ENCODE measurements at regions of chr15 and their contacts with region 1.

Region 1: GRCh38 chr15:68875377-68876116 is 54.8 kb upstream of the SPESP1 start:
- DNase-seq: peak; percentile 92
- ATAC-seq: peak; percentile 90 to 98 (median 96)
- H3K4me3 ChIP-seq: peak overlapping the region in 9 of 10 donors; percentile 11 to 54 (median 45)
- H3K27ac ChIP-seq: no peak overlapping the region
- H3K4me1 ChIP-seq: peaks cover 0 to 10% (median 0%) of the 10 kb centered on the region in 9 donors
- H3K27me3 ChIP-seq: peaks cover 0 to 18% (median 0%) of the 10 kb centered on the region in 7 donors
- CTCF ChIP-seq: peak; percentile 79 to 93 (median 87)

Region 2: DNA sequence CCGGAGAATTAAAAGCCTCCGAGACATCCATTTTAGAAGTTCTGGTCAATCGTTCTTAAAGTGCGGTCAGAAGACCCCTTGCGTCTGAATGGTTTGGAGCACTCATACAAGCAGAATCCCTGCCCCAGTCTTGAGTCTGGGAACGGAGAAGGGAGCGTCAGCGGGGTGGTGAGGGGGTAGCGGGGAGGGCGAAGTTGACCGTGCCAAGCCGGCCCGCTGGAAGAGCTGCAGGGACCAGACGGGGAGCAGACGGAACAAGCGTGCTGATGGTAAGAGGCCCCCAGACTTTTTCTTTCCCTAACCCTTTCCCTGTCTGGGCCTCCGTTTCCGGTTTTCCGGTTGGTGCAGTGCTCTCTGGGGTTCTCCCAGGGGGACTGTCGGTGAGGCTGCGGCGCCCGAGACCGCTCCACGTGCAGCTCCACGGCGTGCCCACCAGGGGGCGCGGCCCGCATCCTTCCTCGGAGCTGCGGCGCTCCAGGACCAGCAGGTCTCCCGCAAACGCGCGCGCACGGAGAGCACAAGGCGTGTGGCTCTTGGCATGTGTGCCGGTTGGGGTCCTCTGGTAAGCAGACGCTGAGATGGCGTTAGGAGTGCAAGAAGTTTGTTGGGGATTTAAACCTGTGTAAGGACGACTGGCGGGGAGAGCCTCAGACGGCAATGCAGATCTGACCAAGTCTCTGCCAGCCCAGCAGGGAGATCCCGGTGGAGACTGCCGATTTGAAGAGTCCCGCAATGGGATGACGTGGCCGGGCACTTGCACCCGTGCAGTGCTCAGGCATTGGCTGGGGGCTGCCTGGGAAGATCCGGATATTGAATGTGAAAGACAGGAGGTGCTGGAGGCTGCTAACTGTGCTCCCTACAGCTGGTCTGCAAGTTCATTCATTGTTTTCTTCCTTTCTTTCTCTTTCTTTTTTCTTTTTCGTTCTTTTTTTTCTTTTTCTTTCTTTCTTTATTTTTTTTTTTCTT is 315.9 kb before region 1 on chr15:
- intact Hi-C with region 1: loop called in 8 of 10 experiments (anchors 2 to 5 kb)
- DNase-seq: peak; percentile 76 to 86
- ATAC-seq: peak; percentile 92 to 98 (median 94)
- H3K4me3 ChIP-seq: peak overlapping the region in 9 of 10 donors; percentile 21 to 63 (median 50)
- H3K27ac ChIP-seq: peak overlapping the region in 3 of 10 donors; percentile 19 to 48 (median 44)
- H3K4me1 ChIP-seq: peaks cover 0 to 19% (median 7%) of the 10 kb centered on the region in 9 donors
- H3K27me3 ChIP-seq: peaks cover 0 to 23% (median 0%) of the 10 kb centered on the region in 7 donors
- CTCF ChIP-seq: peak; percentile 90 to 99 (median 98)

Region 3: DNA sequence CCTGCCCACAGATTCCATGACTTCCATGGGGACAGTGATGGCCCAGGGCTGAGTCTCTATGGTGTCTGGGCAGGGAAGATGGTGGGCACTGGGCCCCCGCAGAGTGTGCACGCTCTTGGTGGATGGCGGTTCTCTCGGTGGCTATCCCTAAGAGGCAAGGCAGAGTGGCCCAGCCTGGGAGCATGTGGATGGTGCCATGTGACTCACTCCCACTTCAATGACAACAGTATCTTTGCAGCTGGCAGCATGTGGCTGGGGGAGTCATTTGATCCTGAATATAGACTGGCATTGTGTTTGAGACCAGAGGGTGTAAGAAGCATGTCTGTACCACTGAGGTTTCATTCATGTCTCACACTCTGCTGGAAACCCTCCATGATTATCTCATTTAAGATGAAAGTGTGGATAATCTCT is 195.6 kb before region 1 on chr15:
- intact Hi-C with region 1: loop called in 6 of 10 experiments (anchors 5 to 10 kb)
- DNase-seq: no peak
- ATAC-seq: no peak
- H3K4me3 ChIP-seq: no peak overlapping the region
- H3K27ac ChIP-seq: no peak overlapping the region
- H3K4me1 ChIP-seq: peaks cover 0 to 21% (median 10%) of the 10 kb centered on the region in 9 donors
- H3K27me3 ChIP-seq: no peaks in the 10 kb centered on the region
- CTCF ChIP-seq: no peak

Region 4: GRCh38 chr15:68783226-68784058 is 92.1 kb before region 1 on chr15:
- intact Hi-C with region 1: loop called in 4 of 10 experiments (anchors 5 to 10 kb)
- DNase-seq: peak in 1 of 2 donors; percentile 41
- ATAC-seq: peak in 6 of 8 donors; percentile 38 to 51 (median 44)
- H3K4me3 ChIP-seq: no peak overlapping the region
- H3K27ac ChIP-seq: peak overlapping the region in 5 of 10 donors; percentile 3 to 90 (median 74)
- H3K4me1 ChIP-seq: peaks cover 10 to 41% (median 33%) of the 10 kb centered on the region in 9 donors
- H3K27me3 ChIP-seq: no peaks in the 10 kb centered on the region
- CTCF ChIP-seq: peak; percentile 37 to 77 (median 66)

Region 5: GRCh38 chr15:68888419-68888818 is 12.9 kb after region 1 on chr15:
- intact Hi-C with region 1: no loop called
- DNase-seq: no peak
- ATAC-seq: no peak
- H3K4me3 ChIP-seq: no peak overlapping the region
- H3K27ac ChIP-seq: no peak overlapping the region
- H3K4me1 ChIP-seq: peaks cover 0 to 11% (median 0%) of the 10 kb centered on the region in 9 donors
- H3K27me3 ChIP-seq: peaks cover 0 to 12% (median 0%) of the 10 kb centered on the region in 7 donors
- CTCF ChIP-seq: no peak

Region 6: GRCh38 chr15:68924866-68925560 is 49.5 kb after region 1 on chr15:
- intact Hi-C with region 1: loop called in 1 of 10 experiments (anchors 2 kb)
- DNase-seq: peak; percentile 69 to 74
- ATAC-seq: peak; percentile 53 to 92 (median 86)
- H3K4me3 ChIP-seq: no peak overlapping the region
- H3K27ac ChIP-seq: no peak overlapping the region
- H3K4me1 ChIP-seq: no peaks in the 10 kb centered on the region
- H3K27me3 ChIP-seq: peaks cover 0 to 4% (median 0%) of the 10 kb centered on the region in 7 donors
- CTCF ChIP-seq: peak; percentile 37 to 88 (median 84)

Measured in heart right ventricle (tissue), 16 donors.